Panc1 (cell line): ENCODE measurements at regions of chr17 and their contacts with region 1.

Region 1: DNA sequence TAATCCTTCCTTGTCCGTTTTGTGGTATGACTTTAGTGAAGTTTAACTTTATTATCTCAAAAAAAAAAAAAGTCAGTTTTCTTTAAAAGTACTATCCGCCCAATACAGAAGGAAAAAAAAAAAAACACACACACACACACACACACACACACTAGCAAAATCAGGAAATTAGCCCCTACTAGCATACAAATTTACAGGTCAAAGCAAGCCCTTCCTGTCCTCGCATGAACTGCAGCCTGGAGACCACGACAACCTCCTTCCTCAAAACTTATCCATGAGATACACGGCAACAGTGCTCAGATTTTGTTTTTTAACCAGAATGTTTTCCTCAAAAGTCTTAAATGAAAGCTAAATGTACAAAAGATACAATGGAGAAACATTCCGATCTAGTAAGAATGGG is 16.2 kb downstream of the NCOR1 start:
- DNase-seq: no peak
- ATAC-seq: no peak
- H3K4me3 ChIP-seq: no peak overlapping the region
- H3K27ac ChIP-seq: no peak overlapping the region
- H3K4me1 ChIP-seq: peaks cover 3% of the 10 kb centered on the region
- H3K27me3 ChIP-seq: no peaks in the 10 kb centered on the region
- CTCF ChIP-seq: no peak

Region 2: GRCh38 chr17:16187642-16188041 is 11.5 kb before region 1 on chr17:
- CTCF ChIA-PET with region 1: no interaction called
- POLR2A ChIA-PET with region 1: interaction called, 11 read pairs
- in situ Hi-C with region 1: no loop called
- intact Hi-C with region 1: no loop called
- DNase-seq: no peak
- ATAC-seq: no peak
- H3K4me3 ChIP-seq: no peak overlapping the region
- H3K27ac ChIP-seq: no peak overlapping the region
- H3K4me1 ChIP-seq: no peaks in the 10 kb centered on the region
- H3K27me3 ChIP-seq: no peaks in the 10 kb centered on the region
- CTCF ChIP-seq: no peak

Region 3: DNA sequence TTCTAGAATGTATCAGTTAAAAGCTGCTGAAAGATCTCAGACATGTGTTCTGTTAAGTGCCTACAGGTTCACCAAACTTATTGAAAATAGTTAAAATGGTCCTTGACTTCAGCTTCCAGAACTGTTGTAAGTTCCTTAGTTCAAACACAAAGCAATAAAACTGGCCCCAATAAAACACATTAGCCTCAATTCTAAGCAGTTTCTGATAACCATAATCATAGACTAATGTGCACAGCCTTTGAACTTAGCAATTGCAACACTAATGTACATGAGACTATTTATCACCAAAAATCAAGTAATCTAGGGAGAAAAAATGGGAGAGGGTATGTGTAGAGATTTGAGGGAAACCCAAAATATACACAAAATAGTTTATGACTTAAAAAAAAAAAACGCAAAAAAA is 33.3 kb after region 1 on chr17:
- CTCF ChIA-PET with region 1: no interaction called
- POLR2A ChIA-PET with region 1: no interaction called
- in situ Hi-C with region 1: no loop called
- intact Hi-C with region 1: no loop called
- DNase-seq: no peak
- ATAC-seq: no peak
- H3K4me3 ChIP-seq: no peak overlapping the region
- H3K27ac ChIP-seq: no peak overlapping the region
- H3K4me1 ChIP-seq: no peaks in the 10 kb centered on the region
- H3K27me3 ChIP-seq: no peaks in the 10 kb centered on the region
- CTCF ChIP-seq: no peak